ENCODE measurements at regions of chr15 and their contacts with region 1.

Region 1: GRCh38 chr15:85504749-85505676 is 124.6 kb downstream of the AKAP13 start:
- DNase-seq: peak; percentile 63
- H3K4me3 Mint-ChIP-seq: no peak overlapping the region
- H3K27ac Mint-ChIP-seq: no peak overlapping the region
- H3K4me1 Mint-ChIP-seq: peaks cover 34% of the 10 kb centered on the region
- H3K27me3 Mint-ChIP-seq: no peaks in the 10 kb centered on the region

Region 2: DNA sequence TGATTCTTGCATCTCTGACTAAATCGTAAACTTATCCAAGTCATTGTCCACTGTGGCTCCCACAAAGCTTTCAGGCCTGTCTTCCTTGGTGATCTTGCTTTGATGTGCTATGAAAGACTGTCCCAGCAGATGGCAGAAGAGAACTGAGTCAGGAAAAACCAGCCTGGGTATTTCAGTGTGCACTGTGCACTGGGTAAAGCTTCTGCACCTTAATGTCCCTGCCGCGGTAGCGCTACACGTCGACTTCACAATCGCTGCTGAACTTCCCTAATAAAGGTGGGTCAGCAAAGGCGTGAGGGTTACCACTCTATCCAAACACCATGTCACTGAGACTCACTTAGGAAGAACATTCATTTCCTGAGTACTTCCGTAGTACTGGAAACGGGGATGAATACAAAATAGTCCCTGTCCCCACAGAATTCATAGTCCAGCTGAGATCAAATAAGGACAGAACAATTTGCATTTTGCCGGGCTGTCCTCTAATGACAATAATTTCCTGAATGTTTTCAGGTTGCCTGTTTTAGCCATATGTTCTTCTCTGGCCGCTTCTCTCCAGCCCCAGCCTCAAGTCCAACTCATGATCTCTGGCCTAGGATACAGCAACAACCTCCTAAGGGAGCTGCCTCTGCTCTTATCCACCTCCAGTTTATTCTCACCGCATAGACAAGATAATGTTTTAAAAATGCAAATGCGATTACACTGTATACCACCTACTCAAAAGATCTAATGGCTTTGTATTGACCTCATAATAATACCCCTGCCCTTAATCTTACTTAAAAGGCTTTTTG is 208.2 kb before region 1 on chr15:
- CTCF ChIA-PET with region 1: interaction called, 29 read pairs
- DNase-seq: peak; percentile 78
- H3K4me3 Mint-ChIP-seq: no peak overlapping the region
- H3K27ac Mint-ChIP-seq: no peak overlapping the region
- H3K4me1 Mint-ChIP-seq: peaks cover 15% of the 10 kb centered on the region
- H3K27me3 Mint-ChIP-seq: peaks cover 7% of the 10 kb centered on the region

Region 3: DNA sequence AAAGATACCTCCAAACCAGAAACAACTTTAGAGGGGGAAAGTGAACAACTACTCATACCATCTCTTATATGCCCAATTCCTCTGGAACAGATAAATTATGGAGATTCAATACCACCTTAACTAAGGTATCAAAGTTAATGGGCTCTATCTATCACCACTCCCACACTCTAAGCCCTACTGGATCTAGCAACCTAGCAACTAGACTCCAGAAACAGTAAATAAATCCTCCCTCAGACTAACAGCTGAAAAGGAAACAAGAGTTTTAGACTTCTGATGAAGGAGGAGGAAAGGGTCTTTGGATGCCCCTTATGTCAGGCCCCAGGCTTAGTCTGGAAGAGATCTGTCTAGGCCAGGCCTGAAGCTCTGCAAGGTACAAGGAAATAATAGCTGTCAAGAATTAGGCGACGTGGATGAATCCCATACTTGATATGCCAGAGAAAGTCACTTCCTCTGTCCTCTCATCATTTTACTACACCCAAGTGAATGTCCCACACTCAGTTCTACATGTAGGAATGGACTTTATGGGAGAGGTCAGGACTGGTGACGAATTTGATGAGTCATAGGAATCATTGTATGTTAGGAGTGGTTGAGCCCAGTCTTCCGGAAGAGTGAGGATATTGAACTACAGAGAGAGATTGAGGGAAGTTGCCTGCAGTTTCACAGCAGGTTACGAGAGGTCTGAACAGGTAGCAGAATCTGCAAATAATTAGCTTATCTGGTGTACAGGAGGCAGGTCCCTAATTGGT is 10.8 kb before region 1 on chr15:
- CTCF ChIA-PET with region 1: interaction called, 31 read pairs
- DNase-seq: no peak
- H3K4me3 Mint-ChIP-seq: no peak overlapping the region
- H3K27ac Mint-ChIP-seq: no peak overlapping the region
- H3K4me1 Mint-ChIP-seq: peaks cover 30% of the 10 kb centered on the region
- H3K27me3 Mint-ChIP-seq: no peaks in the 10 kb centered on the region

Region 4: GRCh38 chr15:85646538-85647091 is 141.6 kb after region 1 on chr15:
- CTCF ChIA-PET with region 1: no interaction called
- DNase-seq: no peak
- H3K4me3 Mint-ChIP-seq: no peak overlapping the region
- H3K27ac Mint-ChIP-seq: peak overlapping the region; percentile 6
- H3K4me1 Mint-ChIP-seq: peaks cover 31% of the 10 kb centered on the region
- H3K27me3 Mint-ChIP-seq: no peaks in the 10 kb centered on the region